Lower lobe of right lung (tissue), 2 donors: ENCODE measurements at regions of chr18 and their contacts with region 1.

Region 1: GRCh38 chr18:36572135-36572856 is 256.5 kb downstream of the TPGS2 start:
- DNase-seq: no peak
- ATAC-seq: peak; percentile 51 to 71
- H3K4me3 ChIP-seq: no peak overlapping the region
- H3K27ac ChIP-seq: no peak overlapping the region
- H3K4me1 ChIP-seq: no peaks in the 10 kb centered on the region
- H3K27me3 ChIP-seq: no peaks in the 10 kb centered on the region
- CTCF ChIP-seq: peak; percentile 45

Region 2: GRCh38 chr18:36095936-36096519 is 476.3 kb before region 1 on chr18:
- intact Hi-C with region 1: loop called (anchors 5 kb)
- DNase-seq: no peak
- ATAC-seq: no peak
- H3K4me3 ChIP-seq: no peak overlapping the region
- H3K27ac ChIP-seq: no peak overlapping the region
- H3K4me1 ChIP-seq: no peaks in the 10 kb centered on the region
- H3K27me3 ChIP-seq: no peaks in the 10 kb centered on the region
- CTCF ChIP-seq: peak; percentile 56